ENCODE measurements at regions of chr14 and their contacts with region 1.

Region 1: DNA sequence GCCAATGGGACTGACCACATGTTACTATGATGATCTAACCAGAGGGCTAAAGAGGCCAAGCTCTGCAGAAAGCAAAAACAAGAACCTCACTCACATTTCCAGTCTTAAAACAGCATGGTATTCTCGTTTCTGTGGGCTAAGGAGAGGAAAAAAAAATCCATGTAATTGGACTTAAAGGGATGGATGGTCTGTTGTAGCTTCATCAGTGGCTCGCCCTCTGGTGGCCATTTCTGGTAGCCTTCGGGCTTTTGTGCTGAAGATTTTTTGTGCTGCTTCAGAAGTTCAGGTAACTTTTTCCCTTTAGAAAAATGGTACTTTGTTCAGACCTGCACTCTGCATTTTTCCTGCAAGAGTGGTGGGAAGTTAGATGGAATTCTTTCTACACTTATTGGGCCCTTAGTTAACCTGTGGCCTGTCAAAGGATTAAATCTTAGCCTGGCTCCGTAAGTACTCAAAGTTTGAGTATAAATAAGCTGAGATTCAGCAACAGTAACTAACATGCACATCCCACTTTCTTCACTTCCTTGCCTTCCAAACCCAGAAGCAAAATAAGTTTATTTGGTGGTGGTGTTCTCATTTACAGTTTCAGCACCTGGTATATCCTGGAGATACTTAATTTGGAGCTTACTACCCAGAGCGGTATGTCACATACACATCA is 22.3 kb downstream of the DCAF4 start:
- DNase-seq: peak; percentile 41
- H3K4me3 ChIP-seq: no peak overlapping the region
- H3K27ac ChIP-seq: no peak overlapping the region
- H3K4me1 ChIP-seq: no peaks in the 10 kb centered on the region
- H3K27me3 ChIP-seq: no peaks in the 10 kb centered on the region
- CTCF ChIP-seq: peak; percentile 84 to 92

Region 2: GRCh38 chr14:72962829-72963312 is 14.3 kb after region 1 on chr14:
- CTCF ChIA-PET with region 1: no interaction called
- dilution Hi-C with region 1: no loop called
- in situ Hi-C with region 1: no loop called
- intact Hi-C with region 1: no loop called
- DNase-seq: peak; percentile 89
- H3K4me3 ChIP-seq: no peak overlapping the region
- H3K27ac ChIP-seq: no peak overlapping the region
- H3K4me1 ChIP-seq: peaks cover 21% of the 10 kb centered on the region
- H3K27me3 ChIP-seq: no peaks in the 10 kb centered on the region
- CTCF ChIP-seq: no peak

Region 3: DNA sequence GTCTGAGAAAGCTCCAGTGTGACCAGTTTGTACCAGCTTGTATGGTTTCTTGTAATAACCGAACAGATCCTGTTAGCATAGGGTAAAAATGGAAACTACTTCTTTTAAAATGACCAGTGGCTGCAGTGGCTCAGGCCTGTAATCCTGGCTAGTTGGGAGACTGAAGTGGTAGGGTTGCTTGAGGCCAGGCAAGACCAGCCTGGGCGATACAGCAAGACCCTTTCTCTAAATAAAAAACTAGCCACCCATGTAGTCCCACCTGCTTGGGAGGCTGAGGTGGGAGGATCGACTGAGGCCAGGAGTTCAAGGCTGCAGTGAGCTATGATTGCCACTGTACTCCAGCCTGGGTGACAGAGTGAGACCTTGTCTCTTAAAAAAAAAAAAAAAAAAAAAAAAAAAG is 195.0 kb after region 1 on chr14:
- CTCF ChIA-PET with region 1: interaction called, 11 read pairs
- dilution Hi-C with region 1: no loop called
- in situ Hi-C with region 1: no loop called
- intact Hi-C with region 1: no loop called
- DNase-seq: no peak
- H3K4me3 ChIP-seq: no peak overlapping the region
- H3K27ac ChIP-seq: no peak overlapping the region
- H3K4me1 ChIP-seq: peaks cover 4% of the 10 kb centered on the region
- H3K27me3 ChIP-seq: no peaks in the 10 kb centered on the region
- CTCF ChIP-seq: no peak

Measured in mammary epithelial cell (primary cell).